Endothelial cell of umbilical vein (primary cell): ENCODE measurements at regions of chr12 and their contacts with region 1.

Region 1: DNA sequence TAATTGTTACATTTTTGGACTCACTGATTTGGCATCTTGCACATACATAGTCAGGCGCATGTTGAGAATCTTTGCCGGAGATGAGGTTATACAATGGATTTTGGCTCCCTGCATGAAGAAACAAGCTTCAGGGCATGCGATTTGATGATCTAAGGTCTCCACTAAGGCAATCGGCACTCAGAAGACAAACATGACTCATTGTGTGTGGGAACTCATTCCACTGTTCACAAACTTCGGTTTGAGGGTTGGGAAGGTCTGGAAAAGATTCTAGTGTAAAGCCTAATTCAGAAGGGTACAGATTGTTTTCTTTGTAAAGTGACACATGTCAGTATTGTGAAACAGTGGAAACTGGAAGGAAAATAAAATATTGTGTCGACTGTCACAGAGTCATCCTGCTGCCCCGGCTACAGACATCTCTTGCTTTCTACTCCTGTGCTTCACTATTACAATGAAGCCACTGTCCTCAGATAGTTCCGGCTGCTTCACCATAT is 192.6 kb upstream of the HMGA2 start:
- DNase-seq: peak; percentile 94
- H3K4me3 ChIP-seq: no peak overlapping the region
- H3K27ac ChIP-seq: peak overlapping the region; percentile 87
- H3K4me1 ChIP-seq: peaks cover 56% of the 10 kb centered on the region
- H3K27me3 ChIP-seq: no peaks in the 10 kb centered on the region
- CTCF ChIP-seq: no peak
- POLR2A ChIP-seq: peak; percentile 49

Region 2: DNA sequence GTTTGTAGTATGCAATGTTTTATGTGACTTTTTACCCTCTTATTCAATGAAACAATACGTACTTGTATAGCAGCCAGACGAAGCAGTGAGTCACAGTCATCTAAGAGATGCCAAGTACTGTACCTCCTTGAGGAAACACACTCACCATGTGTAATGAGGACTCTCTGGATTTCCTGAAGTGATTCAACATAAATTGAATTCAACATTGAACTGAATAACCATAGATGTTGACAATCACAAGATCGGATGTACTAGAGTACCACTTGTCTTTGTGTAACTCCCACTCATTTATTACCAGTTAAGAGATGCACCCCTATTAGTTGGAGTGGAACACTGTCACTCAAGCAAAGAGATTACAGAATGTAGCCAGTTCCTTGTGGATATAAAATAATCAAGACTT is 17.5 kb after region 1 on chr12:
- CTCF ChIA-PET with region 1: interaction called, 6 read pairs
- POLR2A ChIA-PET with region 1: no interaction called
- dilution Hi-C with region 1: no loop called
- intact Hi-C with region 1: loop called (anchors 1 kb)
- DNase-seq: peak; percentile 98
- H3K4me3 ChIP-seq: no peak overlapping the region
- H3K27ac ChIP-seq: peak overlapping the region; percentile 95
- H3K4me1 ChIP-seq: peaks cover 38% of the 10 kb centered on the region
- H3K27me3 ChIP-seq: no peaks in the 10 kb centered on the region
- CTCF ChIP-seq: no peak
- POLR2A ChIP-seq: no peak

Region 3: GRCh38 chr12:66087365-66087943 is 455.8 kb after region 1 on chr12:
- CTCF ChIA-PET with region 1: no interaction called
- POLR2A ChIA-PET with region 1: no interaction called
- dilution Hi-C with region 1: no loop called
- intact Hi-C with region 1: no loop called
- DNase-seq: peak; percentile 67
- H3K4me3 ChIP-seq: no peak overlapping the region
- H3K27ac ChIP-seq: no peak overlapping the region
- H3K4me1 ChIP-seq: peaks cover 2% of the 10 kb centered on the region
- H3K27me3 ChIP-seq: no peaks in the 10 kb centered on the region
- CTCF ChIP-seq: peak; percentile 65 to 76
- POLR2A ChIP-seq: no peak